ENCODE measurements at regions of chrX and their contacts with region 1.

Region 1: GRCh38 chrX:130079824-130080406 is 30.4 kb downstream of the ELF4 start:
- DNase-seq: peak; percentile 63
- CTCF ChIP-seq: peak; percentile 56

Region 2: DNA sequence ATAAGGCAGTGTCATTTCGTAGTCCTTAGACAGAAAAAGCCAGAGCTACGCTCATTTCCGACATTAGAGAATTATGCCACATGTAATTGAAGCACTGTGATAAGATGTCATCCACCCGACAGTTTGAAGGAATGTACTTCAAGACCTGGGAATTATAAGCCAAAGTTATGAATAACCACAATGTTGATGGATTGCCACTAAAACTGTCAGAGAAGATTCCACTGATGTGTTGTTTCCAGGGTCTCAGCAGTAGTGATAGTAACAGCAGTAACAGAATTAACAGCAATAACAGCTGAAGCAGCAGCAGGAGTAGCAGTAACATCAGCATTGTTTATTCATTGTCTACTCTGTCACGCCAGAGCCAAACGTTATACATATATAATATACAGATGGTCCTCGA is 116.6 kb after region 1 on chrX:
- in situ Hi-C with region 1: loop called (anchors 10 kb)
- DNase-seq: no peak
- CTCF ChIP-seq: no peak